Calu3 (cell line): ENCODE measurements at regions of chr11 and their contacts with region 1.

Region 1: GRCh38 chr11:1202776-1203504 is 19.9 kb upstream of the MUC5B start:
- DNase-seq: peak; percentile 84
- H3K4me3 Mint-ChIP-seq: no peak overlapping the region
- H3K27ac Mint-ChIP-seq: no peak overlapping the region
- H3K4me1 Mint-ChIP-seq: peaks cover 14% of the 10 kb centered on the region
- H3K27me3 Mint-ChIP-seq: no peaks in the 10 kb centered on the region
- CTCF ChIP-seq: peak; percentile 81

Region 2: GRCh38 chr11:1073261-1073724 is 129.6 kb before region 1 on chr11:
- CTCF ChIA-PET with region 1: no interaction called
- intact Hi-C with region 1: no loop called
- DNase-seq: peak; percentile 88
- H3K4me3 Mint-ChIP-seq: no peak overlapping the region
- H3K27ac Mint-ChIP-seq: peak overlapping the region; percentile 63
- H3K4me1 Mint-ChIP-seq: peaks cover 14% of the 10 kb centered on the region
- H3K27me3 Mint-ChIP-seq: no peaks in the 10 kb centered on the region
- CTCF ChIP-seq: no peak

Region 3: GRCh38 chr11:1113405-1114201 is 89.3 kb before region 1 on chr11:
- CTCF ChIA-PET with region 1: no interaction called
- intact Hi-C with region 1: loop called (anchors 10 kb)
- DNase-seq: no peak
- H3K4me3 Mint-ChIP-seq: no peak overlapping the region
- H3K27ac Mint-ChIP-seq: no peak overlapping the region
- H3K4me1 Mint-ChIP-seq: peaks cover 10% of the 10 kb centered on the region
- H3K27me3 Mint-ChIP-seq: peaks cover 3% of the 10 kb centered on the region
- CTCF ChIP-seq: no peak

Region 4: DNA sequence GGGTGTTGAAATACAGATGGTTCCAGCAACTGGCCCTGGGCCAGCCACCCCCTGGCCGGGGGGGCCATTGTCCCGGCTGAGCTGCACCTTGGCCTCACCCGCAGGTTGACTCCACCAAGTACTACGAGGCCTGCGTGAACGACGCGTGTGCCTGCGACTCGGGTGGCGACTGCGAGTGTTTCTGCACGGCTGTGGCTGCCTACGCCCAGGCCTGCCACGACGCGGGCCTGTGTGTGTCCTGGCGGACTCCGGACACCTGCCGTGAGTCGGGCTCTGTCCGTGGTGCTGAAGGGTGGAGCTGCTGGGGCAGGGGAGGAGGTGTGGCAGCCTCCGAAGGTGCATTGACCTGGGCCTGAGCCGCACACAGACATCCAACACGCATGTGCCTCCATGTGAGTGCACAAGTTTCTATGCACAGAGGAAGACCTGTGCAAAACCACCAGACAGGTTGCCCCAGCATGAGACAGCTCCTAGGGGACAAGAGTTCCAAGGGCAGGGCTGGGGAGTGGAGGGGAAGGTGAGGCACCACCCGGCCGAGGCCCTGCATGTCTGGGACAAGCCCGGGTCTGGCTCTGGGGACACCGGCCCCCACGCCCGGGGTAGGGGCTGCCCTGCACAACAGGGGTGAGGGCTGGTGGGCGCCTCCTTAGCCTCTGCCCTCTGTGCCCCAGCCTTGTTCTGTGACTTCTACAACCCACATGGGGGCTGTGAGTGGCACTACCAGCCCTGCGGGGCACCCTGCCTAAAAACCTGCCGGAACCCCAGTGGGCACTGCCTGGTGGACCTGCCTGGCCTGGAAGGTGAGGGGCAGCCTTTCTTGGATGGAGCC is 36.0 kb after region 1 on chr11:
- CTCF ChIA-PET with region 1: no interaction called
- intact Hi-C with region 1: loop called (anchors 5 kb)
- DNase-seq: no peak
- H3K4me3 Mint-ChIP-seq: no peak overlapping the region
- H3K27ac Mint-ChIP-seq: no peak overlapping the region
- H3K4me1 Mint-ChIP-seq: peaks cover 9% of the 10 kb centered on the region
- H3K27me3 Mint-ChIP-seq: no peaks in the 10 kb centered on the region
- CTCF ChIP-seq: no peak